KBM-7 (cell line): ENCODE measurements at regions of chr6 and their contacts with region 1.

Region 1: GRCh38 chr6:166435574-166435973 is 52.8 kb upstream of the MPC1 start:
- DNase-seq: peak; percentile 81

Region 2: DNA sequence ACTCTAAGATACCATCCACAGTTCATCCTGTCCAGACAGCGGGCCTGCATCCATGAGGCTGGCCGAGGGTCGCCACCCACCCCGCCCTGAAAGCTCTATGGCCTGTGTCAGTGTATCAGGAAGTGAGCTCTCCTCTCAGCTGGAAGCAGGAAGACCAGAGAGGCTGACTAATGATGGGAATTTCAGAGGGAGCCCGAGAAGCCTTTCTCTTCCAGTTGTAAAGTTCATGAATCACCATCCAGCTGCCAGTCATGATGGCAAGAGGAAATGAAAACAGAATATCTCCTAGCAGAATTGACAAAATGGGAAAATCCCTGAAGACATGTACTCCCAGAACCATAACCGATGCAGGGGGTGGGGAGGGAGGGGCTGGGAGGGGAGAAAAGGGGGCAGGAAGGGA is 301.1 kb after region 1 on chr6:
- in situ Hi-C with region 1: no loop called
- DNase-seq: no peak

Region 3: DNA sequence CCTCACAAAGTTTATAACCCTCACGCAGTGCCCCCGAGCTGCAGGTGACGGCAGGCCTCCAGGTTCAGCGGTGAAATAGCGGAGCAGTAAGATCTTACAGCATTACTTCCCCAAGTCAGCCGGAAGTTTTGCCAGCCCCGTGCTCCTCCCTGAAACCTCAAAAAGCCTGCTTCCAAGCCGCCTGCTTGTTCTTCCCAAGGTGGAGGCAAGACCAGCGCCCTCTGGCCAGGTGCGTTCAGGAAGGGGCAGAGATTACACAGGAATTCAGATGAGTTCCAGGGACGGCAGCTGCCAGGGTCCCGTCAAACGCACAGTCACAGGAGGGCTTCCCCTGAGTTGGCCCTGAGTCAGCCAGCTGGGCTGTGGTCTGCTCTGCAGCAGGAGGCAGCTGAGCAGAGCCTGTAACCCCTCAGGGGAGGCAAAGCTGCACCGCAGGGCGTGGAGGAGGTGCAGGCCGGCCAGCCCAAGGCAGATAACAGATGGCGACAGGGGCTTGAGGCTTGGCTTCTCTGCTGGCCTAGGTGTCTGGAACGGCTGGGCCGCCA is 315.5 kb after region 1 on chr6:
- in situ Hi-C with region 1: loop called (anchors 25 kb)
- DNase-seq: peak; percentile 79

Region 4: GRCh38 chr6:166782520-166782919 is 346.9 kb after region 1 on chr6:
- in situ Hi-C with region 1: no loop called
- DNase-seq: no peak